AG04449 (cell line): ENCODE measurements at regions of chr15 and their contacts with region 1.

Region 1: GRCh38 chr15:90320061-90320884 is 31.8 kb upstream of the ZNF774 start:
- DNase-seq: peak; percentile 58
- H3K4me3 ChIP-seq: 0 out of 2 replicates have a peak overlapping the region, but pooled peaks have one; percentile 12
- CTCF ChIP-seq: peak; percentile 98

Region 2: GRCh38 chr15:90291679-90292356 is 28.5 kb before region 1 on chr15:
- CTCF ChIA-PET with region 1: interaction called, 14 read pairs
- POLR2A ChIA-PET with region 1: no interaction called
- DNase-seq: no peak
- H3K4me3 ChIP-seq: no peak overlapping the region
- CTCF ChIP-seq: no peak

Region 3: DNA sequence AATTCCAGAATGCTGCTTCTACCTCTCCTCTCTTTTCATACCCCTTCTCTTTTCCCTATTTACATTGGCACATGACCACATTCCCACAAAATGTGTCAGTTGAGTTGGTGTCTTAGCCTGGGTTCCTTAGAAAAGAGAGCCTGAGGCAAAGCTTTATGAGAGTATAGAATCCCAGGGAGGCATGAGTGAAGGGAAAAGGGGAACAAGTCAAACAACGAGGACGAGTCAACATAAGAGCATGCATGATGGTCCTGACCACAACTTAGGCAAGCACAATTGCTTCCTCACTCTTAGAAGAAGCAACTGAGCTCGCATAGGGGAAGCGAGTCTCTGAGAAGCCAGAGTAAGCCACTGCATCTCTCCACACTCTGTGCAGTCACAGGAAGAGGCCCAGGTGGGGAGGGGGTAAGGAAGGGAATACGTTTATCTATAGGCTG is 16.4 kb after region 1 on chr15:
- CTCF ChIA-PET with region 1: interaction called, 48 read pairs
- POLR2A ChIA-PET with region 1: no interaction called
- DNase-seq: no peak
- H3K4me3 ChIP-seq: no peak overlapping the region
- CTCF ChIP-seq: no peak

Region 4: DNA sequence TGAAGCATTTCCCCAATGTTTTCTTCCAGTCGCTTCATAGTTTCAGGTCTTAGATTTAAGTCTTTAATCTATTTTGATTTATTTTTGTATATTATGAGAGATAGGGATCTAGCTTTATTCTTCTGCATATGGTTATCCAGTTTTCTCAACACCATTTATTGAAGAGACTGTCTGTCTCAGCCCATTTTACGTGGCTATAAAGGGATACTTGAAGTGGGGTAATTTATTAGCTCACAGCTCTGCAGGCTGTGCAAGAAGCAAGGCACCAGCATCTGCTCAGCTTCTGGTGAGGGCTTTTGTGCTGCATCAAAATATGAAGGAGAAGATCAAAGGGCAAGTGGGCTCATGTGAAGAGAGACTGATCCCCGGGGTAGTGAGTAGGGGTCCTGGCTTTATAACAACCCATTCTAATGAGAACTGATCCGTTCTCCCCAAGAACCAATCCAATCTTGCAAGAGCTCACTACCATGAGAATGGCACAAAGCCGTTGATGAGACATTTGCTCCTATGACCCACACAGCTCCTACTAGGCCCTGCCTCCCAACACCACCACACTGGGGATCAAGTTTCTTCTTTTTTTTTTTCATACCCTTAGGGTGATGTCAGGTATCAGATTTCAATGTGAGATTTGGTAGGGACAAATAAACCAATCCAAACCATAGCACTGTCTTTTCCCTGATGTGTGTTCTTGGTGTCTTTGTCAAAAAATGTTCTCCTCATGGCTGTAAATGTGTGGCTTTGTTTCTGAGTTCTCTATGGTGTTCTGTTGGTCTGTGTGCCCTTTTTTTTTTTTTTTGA is 131.0 kb after region 1 on chr15:
- CTCF ChIA-PET with region 1: interaction called, 16 read pairs
- POLR2A ChIA-PET with region 1: no interaction called
- DNase-seq: peak; percentile 33
- H3K4me3 ChIP-seq: no peak overlapping the region
- CTCF ChIP-seq: no peak

Region 5: GRCh38 chr15:90482124-90483011 is 162.1 kb after region 1 on chr15:
- CTCF ChIA-PET with region 1: interaction called, 356 read pairs
- POLR2A ChIA-PET with region 1: no interaction called
- DNase-seq: no peak
- H3K4me3 ChIP-seq: no peak overlapping the region
- CTCF ChIP-seq: peak; percentile 57

Region 6: DNA sequence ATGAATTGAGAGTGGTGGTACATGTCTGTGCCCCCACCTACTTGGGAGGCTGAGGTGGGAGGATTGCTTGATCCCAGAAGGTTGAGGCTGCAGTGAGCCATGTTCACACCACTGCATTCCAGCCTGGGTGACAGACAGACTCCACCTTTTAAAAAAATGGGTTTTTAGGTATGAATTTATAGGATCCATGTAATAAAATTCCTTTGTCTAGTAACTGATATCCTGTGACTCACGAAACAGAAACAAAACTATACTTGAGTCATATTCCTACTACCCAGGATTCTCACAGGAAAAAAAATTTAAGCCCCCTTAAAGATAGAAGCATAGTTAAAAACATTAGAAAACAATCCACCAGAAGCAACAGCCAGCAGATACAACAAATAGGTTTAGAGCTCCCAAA is 199.4 kb after region 1 on chr15:
- CTCF ChIA-PET with region 1: interaction called, 12 read pairs
- POLR2A ChIA-PET with region 1: no interaction called
- DNase-seq: no peak
- H3K4me3 ChIP-seq: no peak overlapping the region
- CTCF ChIP-seq: no peak